ENCODE measurements at regions of chr11 and their contacts with region 1.

Region 1: DNA sequence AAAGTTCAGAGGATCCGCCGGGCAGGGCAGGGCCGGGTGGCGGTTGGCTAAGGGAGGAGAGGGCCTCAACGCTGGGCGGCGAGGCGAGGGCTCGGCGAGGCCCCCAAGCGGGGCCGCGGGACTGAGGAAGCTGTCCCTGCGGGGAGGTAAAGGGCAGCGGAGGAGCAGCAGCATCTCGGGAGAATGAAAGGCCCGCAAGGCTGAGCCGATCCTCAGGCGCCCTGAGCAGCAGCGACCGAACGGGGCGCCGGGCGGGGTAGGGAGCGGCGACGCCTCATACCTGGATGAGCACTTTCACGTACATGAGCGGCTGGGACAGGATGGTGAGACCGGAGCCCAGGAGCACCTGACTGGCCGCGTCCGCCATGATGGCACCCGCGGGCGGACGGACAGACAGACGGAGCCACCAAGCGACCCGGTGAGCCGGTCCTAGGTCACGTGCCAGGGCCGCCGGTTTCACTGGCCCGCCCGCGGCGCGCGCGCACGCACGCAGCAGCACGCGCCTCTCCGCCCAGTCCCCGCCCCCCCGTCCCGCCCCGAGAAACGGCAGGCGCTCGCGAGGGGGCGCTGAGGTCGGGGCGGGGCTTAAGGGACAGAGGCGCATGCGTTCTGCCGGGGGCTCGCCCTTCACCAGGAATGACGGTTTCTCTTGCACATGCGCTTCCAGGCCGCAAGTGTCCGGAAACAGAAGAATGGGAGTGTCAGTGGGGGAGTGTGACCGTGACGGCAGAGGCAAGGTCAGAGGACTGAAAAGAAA is at the start of gene MTCH2:
- DNase-seq: peak; percentile 97
- H3K4me3 Mint-ChIP-seq: peak within 1 kb of the TSS; percentile 99
- H3K27ac Mint-ChIP-seq: peak within 1 kb of the TSS; percentile 97
- H3K4me1 Mint-ChIP-seq: peaks cover 5% of the 10 kb centered on the region
- H3K27me3 Mint-ChIP-seq: no peaks in the 10 kb centered on the region
- CTCF ChIP-seq: no peak
- total RNA-seq, gene MTCH2: 127 and 133 TPM in 2 replicates

Region 2: DNA sequence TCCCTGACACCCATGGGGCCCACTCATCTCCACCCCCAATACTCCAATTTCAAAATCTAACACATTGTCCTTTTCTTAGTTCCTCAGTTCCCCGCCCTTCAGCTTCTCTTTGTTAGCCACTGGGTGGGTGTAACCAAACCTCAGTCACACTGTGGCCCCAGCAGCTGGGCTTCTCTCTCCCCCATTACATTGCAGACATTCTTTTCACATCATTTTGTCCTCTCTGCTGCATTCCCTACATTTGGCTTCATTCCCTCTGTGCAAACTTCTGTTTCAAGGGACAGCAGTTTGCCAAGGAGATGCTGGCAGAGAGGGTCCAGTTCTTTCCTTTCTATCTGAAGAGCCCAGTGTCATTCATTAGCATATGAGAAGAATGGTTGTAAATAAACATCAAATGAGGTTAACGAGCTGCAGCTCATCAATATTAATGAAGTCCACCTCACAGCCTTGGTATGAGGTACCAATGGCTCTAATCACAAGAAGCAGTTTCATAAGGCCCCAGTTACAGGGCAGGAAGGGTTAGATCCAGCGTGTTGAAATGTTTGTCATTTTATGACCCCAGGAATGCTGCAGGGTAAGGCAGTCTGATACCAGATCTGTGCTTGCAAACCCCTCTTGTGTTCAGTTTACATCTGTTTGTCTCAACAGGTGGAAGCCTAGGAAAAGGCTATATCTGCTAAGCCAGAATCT is 537.9 kb before region 1 on chr11:
- CTCF ChIA-PET with region 1: no interaction called
- POLR2A ChIA-PET with region 1: no interaction called
- intact Hi-C with region 1: no loop called
- DNase-seq: no peak
- H3K4me3 Mint-ChIP-seq: no peak overlapping the region
- H3K27ac Mint-ChIP-seq: no peak overlapping the region
- H3K4me1 Mint-ChIP-seq: peaks cover 7% of the 10 kb centered on the region
- H3K27me3 Mint-ChIP-seq: no peaks in the 10 kb centered on the region
- CTCF ChIP-seq: no peak

Region 3: DNA sequence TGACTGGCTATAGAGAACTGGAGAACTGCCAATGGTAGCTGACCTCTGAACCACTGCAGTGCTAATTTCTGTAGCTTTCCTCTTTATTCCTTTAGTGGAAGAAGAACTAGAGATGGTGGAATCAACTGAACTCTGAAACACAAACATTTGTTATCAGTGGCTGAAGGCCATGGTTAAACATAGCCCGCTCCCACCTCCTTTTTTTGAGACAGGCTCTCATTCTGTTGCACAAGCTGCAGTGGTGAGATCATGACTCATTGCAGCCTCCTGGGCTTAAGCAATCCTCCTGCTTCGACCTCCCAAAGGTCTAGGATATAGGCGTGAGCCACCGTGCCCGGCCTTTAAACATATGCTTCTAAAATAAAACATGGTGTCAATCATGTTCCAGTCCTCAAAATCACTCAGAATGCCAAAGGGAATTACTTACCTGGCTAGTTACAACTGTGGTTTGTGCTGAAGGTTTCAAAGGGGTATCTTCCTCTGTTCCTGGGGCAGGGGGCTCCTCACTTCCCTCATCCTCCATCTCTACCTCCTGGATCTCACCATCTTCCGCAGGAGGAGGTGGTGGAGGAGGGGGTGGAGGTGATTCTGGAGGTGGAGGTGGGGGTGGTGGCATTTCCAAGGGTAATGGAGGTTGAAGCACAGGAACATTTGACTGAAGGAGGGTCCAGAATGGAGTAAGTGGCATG is 81.9 kb after region 1 on chr11:
- CTCF ChIA-PET with region 1: interaction called, 4 read pairs
- POLR2A ChIA-PET with region 1: no interaction called
- intact Hi-C with region 1: loop called (anchors 5 kb)
- DNase-seq: peak; percentile 88
- H3K4me3 Mint-ChIP-seq: no peak overlapping the region
- H3K27ac Mint-ChIP-seq: peak overlapping the region; percentile 74
- H3K4me1 Mint-ChIP-seq: peaks cover 8% of the 10 kb centered on the region
- H3K27me3 Mint-ChIP-seq: no peaks in the 10 kb centered on the region
- CTCF ChIP-seq: no peak

Region 4: DNA sequence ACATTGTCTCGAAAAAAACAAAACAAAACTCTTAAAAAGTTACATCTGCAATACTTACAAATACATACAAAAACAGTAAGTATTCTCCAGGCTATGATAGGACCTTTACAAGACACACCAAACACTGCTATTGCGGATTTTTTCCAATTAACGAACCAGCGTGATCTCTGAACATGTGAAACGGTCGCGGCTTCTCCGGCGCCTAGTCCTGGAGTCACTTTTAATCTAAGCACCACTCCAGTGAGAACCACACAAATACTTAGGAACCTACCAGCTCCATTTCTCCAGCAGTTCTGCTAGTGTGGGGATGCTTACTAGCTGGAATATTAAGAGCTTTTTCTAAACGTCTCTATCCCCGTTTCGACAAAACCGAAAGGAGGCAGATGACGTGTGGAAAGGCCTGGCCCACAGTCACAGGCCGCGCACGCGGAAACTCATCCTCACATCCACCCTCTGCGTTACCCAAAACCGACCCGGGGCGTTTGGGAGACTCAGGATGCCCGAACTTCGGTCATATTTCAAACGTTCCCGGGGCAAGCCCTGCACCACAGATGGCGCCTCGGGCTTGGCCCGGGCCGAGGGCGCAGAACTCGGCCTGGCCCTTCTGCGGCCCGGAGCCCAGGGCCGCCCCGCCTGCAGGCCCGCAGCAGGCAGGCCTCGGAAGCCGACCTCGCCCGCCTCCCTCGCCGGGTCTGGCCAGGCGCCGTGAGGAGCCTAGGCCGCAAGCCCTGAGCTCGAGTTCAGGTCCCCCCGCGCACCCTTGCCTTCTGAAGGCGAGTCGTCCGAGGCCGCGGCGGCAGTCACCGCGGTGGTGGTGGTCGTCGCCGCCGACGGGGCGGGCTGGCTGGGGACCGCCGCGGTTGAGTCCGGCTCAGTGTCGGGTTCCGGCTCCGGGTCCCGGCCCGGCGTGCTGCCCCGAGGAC is 124.3 kb after region 1 on chr11:
- CTCF ChIA-PET with region 1: no interaction called
- POLR2A ChIA-PET with region 1: interaction called, 23 read pairs
- intact Hi-C with region 1: no loop called
- DNase-seq: peak; percentile 62
- H3K4me3 Mint-ChIP-seq: peak overlapping the region; percentile 79
- H3K27ac Mint-ChIP-seq: peak overlapping the region; percentile 93
- H3K4me1 Mint-ChIP-seq: peaks cover 14% of the 10 kb centered on the region
- H3K27me3 Mint-ChIP-seq: no peaks in the 10 kb centered on the region
- CTCF ChIP-seq: no peak

Region 5: GRCh38 chr11:47847892-47848635 is 205.8 kb after region 1 on chr11 and contains the start of gene NUP160:
- CTCF ChIA-PET with region 1: interaction called, 4 read pairs
- POLR2A ChIA-PET with region 1: interaction called, 3 read pairs
- intact Hi-C with region 1: loop called (anchors 2 kb)
- DNase-seq: peak; percentile 66
- H3K4me3 Mint-ChIP-seq: peak within 1 kb of the TSS; percentile 90
- H3K27ac Mint-ChIP-seq: peak within 1 kb of the TSS; percentile 93
- H3K4me1 Mint-ChIP-seq: peaks cover 27% of the 10 kb centered on the region
- H3K27me3 Mint-ChIP-seq: no peaks in the 10 kb centered on the region
- CTCF ChIP-seq: no peak
- total RNA-seq, gene NUP160: 32.0 and 33.8 TPM in 2 replicates

Region 6: DNA sequence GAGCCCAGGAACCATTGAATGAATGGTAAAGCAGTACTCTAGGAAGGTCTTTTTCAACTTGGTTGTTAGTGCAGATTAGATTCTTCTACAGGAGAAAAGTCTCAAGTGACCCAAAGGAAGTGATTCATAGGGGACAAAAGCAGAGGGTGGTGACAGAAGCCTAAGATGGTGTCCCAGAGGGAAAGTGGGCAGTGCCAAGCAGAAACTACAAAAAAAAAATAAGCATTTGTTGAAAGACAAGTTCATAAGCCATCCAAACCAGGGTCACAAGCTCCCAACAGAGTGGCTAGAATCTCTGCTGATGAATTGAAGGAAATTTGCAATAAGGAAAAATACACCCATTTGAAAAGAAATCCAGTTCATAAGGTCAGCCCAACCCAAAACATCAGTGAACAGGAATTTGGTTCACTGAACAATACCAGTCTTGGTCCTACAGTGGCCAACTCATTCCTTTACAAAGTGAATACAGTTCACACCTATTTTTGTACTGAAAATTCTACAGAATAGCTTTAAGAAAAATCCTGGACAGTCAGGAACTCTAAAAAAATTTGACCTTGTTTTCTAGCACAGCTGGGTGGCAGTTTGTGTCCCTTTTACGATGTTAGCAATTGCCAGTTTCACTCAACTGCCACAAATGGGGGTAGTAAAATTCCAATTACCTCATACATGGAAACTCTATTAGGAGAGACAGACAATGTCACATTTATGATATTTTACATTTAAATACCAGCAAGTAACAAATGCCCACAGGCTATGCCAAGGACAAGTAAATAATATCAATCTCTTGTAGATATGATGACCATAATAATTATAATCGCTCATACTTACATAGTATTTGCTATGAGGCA is 227.5 kb after region 1 on chr11:
- CTCF ChIA-PET with region 1: no interaction called
- POLR2A ChIA-PET with region 1: no interaction called
- intact Hi-C with region 1: no loop called
- DNase-seq: no peak
- H3K4me3 Mint-ChIP-seq: no peak overlapping the region
- H3K27ac Mint-ChIP-seq: no peak overlapping the region
- H3K4me1 Mint-ChIP-seq: no peaks in the 10 kb centered on the region
- H3K27me3 Mint-ChIP-seq: no peaks in the 10 kb centered on the region
- CTCF ChIP-seq: no peak

Measured in MCF 10A (cell line).